GM12878 (cell line): ENCODE measurements at regions of chr10 and their contacts with region 1.

Region 1: DNA sequence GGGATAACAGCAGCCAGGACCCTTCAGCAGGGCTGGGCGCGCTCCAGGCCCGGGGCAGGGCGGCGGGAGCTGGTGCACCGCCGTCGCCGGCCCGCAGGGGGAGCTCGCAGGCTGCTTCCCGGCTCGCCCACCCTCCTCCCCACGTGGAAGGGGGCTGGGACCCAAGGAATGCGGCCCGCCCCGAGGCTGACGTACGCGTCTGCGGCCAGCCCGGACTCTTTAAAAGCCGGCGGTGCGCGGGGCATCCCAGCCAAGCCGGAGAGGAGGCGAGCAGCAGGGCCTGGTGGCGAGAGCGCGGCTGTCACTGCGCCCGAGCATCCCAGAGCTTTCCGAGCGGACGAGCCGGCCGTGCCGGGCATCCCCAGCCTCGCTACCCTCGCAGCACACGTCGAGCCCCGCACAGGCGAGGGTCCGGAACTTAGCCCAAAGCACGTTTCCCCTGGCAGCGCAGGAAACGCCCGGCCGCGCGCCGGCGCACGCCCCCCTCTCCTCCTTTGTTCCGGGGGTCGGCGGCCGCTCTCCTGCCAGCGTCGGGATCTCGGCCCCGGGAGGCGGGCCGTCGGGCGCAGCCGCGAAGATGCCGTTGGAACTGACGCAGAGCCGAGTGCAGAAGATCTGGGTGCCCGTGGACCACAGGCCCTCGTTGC is at the start of gene PFKFB3:
- DNase-seq: peak; percentile 59
- ATAC-seq: peak; percentile 80
- H3K4me3 ChIP-seq: peak within 1 kb of the TSS; percentile 95
- H3K27ac ChIP-seq: peak within 1 kb of the TSS; percentile 35; the same call in 1 of the 2 replicates
- H3K4me1 ChIP-seq: peaks cover 10% of the 10 kb centered on the region
- H3K27me3 ChIP-seq: no peaks in the 10 kb centered on the region
- CTCF ChIP-seq: peak; percentile 84 to 96 (median 90); a peak in 5 of 6 replicates
- EP300 ChIP-seq: peak in 1 of 2 experiments; percentile 8; a peak in 1 of 4 replicates
- POLR2A ChIP-seq: peak; percentile 100
- RAD21 ChIP-seq: peak; percentile 76
- polyA plus RNA-seq, gene PFKFB3: 1.6 to 2.6 TPM

Region 2: DNA sequence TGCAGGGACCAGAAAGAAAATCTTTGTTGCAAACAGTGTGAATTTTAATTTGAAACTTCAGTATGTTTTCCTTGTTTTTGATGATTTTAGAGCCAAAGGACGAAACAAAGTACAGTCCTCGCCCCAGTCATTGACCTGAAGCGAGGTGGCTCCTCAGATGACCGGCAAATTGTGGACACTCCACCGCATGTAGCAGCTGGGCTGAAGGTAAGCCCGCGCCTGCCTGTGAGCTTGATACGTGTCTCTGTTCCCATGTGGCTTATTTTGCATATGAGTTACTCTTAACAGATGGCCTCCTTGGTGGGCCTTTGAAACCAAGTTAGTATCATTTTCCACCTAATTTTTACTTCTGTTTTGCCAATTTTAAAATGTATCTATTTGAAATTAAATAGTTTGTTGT is 101.6 kb before region 1 on chr10:
- CTCF ChIA-PET with region 1: interaction called, 11 read pairs
- POLR2A ChIA-PET with region 1: interaction called, 10 read pairs
- RAD21 ChIA-PET with region 1: interaction called, 3 read pairs
- SMC1A ChIA-PET with region 1: interaction called, 10 read pairs
- in situ Hi-C with region 1: no loop called
- intact Hi-C with region 1: no loop called
- DNase-seq: no peak
- ATAC-seq: peak; percentile 94
- H3K4me3 ChIP-seq: no peak overlapping the region
- H3K27ac ChIP-seq: peak overlapping the region; percentile 53
- H3K4me1 ChIP-seq: peaks cover 7% of the 10 kb centered on the region
- H3K27me3 ChIP-seq: no peaks in the 10 kb centered on the region
- CTCF ChIP-seq: no peak
- EP300 ChIP-seq: no peak
- POLR2A ChIP-seq: peak; percentile 55; the same call in 1 of the 2 replicates
- RAD21 ChIP-seq: no peak

Region 3: DNA sequence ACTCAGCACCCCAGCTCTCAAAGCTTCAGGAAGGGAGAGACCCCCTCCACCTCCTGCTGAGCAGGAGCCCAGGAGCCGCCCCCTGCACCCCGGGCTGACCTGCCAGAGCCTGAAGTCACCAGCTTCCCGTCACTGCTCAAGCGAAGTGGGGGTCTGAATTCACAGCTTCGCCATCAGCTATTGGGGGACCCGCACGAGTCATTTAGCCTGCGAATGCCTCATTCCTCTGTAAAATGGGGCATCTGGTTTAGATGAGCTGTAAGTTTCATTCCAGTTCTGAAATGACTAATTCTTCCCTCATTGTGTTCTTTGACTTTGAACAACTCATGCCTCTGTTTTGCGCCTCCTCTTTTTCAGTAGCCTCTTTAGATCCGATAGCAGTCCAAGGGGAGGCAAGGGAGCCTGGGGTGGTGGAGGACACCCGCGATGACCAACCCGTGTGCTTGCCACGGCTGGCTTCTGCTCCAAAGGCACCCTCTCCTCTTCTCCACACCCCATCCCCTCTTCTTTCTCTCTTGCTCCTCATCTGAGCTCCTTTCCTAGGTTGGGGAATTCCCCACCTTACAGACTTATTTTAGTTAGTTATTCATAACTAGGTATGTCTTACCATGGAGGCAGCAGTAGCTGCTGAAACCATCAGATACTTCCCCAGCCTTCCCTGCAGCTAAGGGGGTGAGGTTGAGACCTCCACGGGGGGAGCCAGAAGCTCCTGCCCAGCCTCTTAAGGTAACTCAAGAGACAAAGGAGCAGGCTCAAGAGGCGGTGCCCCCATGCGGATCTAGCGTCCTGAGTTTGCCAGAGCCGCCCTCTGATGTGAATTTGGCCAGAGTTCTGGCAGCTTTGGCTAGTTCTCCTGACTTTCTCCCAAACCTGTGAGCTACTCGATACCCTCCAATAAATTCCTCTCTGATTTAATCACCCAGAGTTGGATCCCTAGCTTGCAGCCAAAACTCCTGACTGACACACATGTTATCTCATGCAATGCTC is 66.3 kb before region 1 on chr10:
- CTCF ChIA-PET with region 1: interaction called, 24 read pairs
- POLR2A ChIA-PET with region 1: interaction called, 5 read pairs
- RAD21 ChIA-PET with region 1: interaction called, 24 read pairs
- SMC1A ChIA-PET with region 1: interaction called, 28 read pairs
- in situ Hi-C with region 1: no loop called
- intact Hi-C with region 1: no loop called
- DNase-seq: peak; percentile 66
- ATAC-seq: peak; percentile 71
- H3K4me3 ChIP-seq: peak overlapping the region; percentile 54
- H3K27ac ChIP-seq: peak overlapping the region; percentile 63
- H3K4me1 ChIP-seq: peaks cover 38% of the 10 kb centered on the region
- H3K27me3 ChIP-seq: no peaks in the 10 kb centered on the region
- CTCF ChIP-seq: 0 out of 6 replicates have a peak, but pooled peaks of 1 of the 3 experiments have one; percentile 1
- EP300 ChIP-seq: peak in 1 of 2 experiments; percentile 74; a peak in 2 of 4 replicates
- POLR2A ChIP-seq: no peak
- RAD21 ChIP-seq: no peak

Region 4: DNA sequence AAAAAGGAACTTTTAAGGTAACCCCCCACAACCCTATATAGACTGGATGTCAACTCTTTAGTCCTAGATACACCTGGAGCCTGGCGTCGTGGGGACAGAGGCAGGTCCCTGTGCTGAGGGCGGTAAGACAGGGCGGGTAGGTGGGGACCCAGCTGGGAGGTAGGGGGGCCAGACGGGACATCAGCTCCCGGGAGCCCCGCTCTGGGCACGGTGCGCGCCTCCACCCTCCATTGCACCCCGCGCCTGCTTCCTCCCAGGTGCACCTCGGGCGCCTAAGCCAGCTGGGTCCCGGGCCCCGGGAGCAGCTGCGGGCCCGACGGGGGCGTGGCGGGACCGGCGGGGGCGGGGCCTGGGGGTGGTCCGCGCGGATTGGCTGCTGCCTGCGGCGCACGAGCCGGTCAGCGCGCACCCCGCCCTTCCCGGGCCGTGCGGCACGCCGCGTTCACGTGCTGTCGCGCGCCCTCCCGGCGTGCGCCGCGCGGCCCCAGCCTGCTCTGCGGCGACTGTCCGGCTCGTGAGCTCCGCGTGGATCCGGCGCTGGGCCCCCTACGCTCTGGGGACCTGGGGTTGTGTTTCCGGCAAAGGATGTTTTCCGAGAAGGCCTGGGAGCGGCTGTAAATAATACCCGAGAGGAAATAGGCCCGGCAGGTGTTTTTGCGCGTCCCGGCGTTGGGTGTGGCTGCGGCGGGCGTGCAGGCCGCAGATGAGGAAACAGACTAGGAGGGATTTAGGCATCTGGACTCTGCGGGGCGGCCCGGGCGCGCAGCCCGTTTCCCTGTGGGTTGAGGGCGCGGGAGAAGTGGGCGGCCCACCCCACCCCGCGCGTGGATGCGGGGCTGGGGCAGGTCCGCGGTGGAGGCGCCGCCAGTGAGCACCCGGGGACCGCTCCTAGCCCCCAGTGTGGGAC is 39.2 kb before region 1 on chr10:
- CTCF ChIA-PET with region 1: interaction called, 7 read pairs
- POLR2A ChIA-PET with region 1: interaction called, 8 read pairs
- RAD21 ChIA-PET with region 1: interaction called, 9 read pairs
- SMC1A ChIA-PET with region 1: interaction called, 7 read pairs
- in situ Hi-C with region 1: no loop called
- intact Hi-C with region 1: loop called (anchors 2 kb)
- DNase-seq: peak; percentile 47
- ATAC-seq: peak; percentile 99
- H3K4me3 ChIP-seq: peak overlapping the region; percentile 67
- H3K27ac ChIP-seq: peak overlapping the region; percentile 83
- H3K4me1 ChIP-seq: no peaks in the 10 kb centered on the region; the same call in 1 of the 2 replicates
- H3K27me3 ChIP-seq: no peaks in the 10 kb centered on the region
- CTCF ChIP-seq: no peak
- EP300 ChIP-seq: no peak
- POLR2A ChIP-seq: peak; percentile 85
- RAD21 ChIP-seq: no peak

Region 5: GRCh38 chr10:6275022-6275997 is 72.5 kb after region 1 on chr10:
- CTCF ChIA-PET with region 1: interaction called, 5 read pairs
- POLR2A ChIA-PET with region 1: interaction called, 3 read pairs
- RAD21 ChIA-PET with region 1: interaction called, 13 read pairs
- SMC1A ChIA-PET with region 1: interaction called, 4 read pairs
- in situ Hi-C with region 1: no loop called
- intact Hi-C with region 1: loop called (anchors 1 kb)
- DNase-seq: peak; percentile 49
- ATAC-seq: peak; percentile 77
- H3K4me3 ChIP-seq: peak overlapping the region; percentile 10; the same call in 1 of the 2 replicates
- H3K27ac ChIP-seq: peak overlapping the region; percentile 51
- H3K4me1 ChIP-seq: peaks cover 28% of the 10 kb centered on the region
- H3K27me3 ChIP-seq: peaks cover 0 to 1% of the 10 kb centered on the region in 2 experiments; a peak in 1 of 4 replicates
- CTCF ChIP-seq: 0 out of 6 replicates have a peak, but pooled peaks of 1 of the 3 experiments have one; percentile 2
- EP300 ChIP-seq: 0 out of 4 replicates have a peak, but pooled peaks have one; percentile 51 to 52
- POLR2A ChIP-seq: peak; percentile 77
- RAD21 ChIP-seq: peak; percentile 10; the same call in 1 of the 2 replicates

Region 6: GRCh38 chr10:6348096-6348874 is 145.5 kb after region 1 on chr10:
- CTCF ChIA-PET with region 1: interaction called, 15 read pairs
- POLR2A ChIA-PET with region 1: interaction called, 7 read pairs
- RAD21 ChIA-PET with region 1: interaction called, 35 read pairs
- SMC1A ChIA-PET with region 1: interaction called, 14 read pairs
- in situ Hi-C with region 1: no loop called
- intact Hi-C with region 1: loop called (anchors 1 kb)
- DNase-seq: peak; percentile 93
- ATAC-seq: peak; percentile 95
- H3K4me3 ChIP-seq: peak overlapping the region; percentile 27; the same call in 1 of the 2 replicates
- H3K27ac ChIP-seq: peak overlapping the region; percentile 23
- H3K4me1 ChIP-seq: peaks cover 26% of the 10 kb centered on the region
- H3K27me3 ChIP-seq: no peaks in the 10 kb centered on the region
- CTCF ChIP-seq: no peak
- EP300 ChIP-seq: peak; percentile 96 to 97; a peak in 3 of 4 replicates
- POLR2A ChIP-seq: no peak
- RAD21 ChIP-seq: 0 out of 2 replicates have a peak, but pooled peaks have one; percentile 23

Region 7: DNA sequence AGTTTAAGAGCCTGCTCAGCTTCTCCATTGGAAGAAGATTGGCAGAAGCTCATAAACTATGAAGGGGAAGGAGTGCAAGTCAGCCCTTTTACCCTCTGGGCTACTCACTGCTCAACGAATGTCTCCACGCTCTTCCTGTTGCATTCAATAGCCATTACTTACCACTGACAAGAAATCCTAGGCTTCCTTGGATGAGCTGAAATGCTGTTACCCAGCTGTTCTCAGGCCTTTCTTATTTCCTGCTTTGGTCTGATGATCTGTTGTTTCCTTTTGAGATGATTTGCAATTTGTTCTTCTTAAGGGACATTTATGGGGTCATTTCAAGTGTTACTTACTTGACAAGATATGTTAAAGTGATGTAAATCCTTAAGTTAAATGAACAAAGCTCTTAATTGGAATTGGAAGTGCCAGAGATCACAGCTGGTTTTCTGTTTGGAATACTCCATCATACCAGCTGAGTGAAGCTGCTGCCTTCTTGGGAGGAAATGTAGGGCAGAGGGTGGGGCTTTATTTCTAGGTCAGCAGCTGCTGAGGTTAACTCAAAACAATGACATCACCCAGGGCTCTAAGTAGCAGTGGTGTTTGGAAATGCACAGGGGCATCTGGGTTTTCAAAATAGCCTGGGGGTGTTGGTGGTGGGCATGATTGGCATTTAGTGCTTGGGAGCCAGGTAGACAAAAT is 207.3 kb after region 1 on chr10:
- CTCF ChIA-PET with region 1: interaction called, 46 read pairs
- POLR2A ChIA-PET with region 1: interaction called, 5 read pairs
- RAD21 ChIA-PET with region 1: interaction called, 29 read pairs
- SMC1A ChIA-PET with region 1: interaction called, 28 read pairs
- in situ Hi-C with region 1: no loop called
- intact Hi-C with region 1: no loop called
- DNase-seq: no peak
- ATAC-seq: peak; percentile 72
- H3K4me3 ChIP-seq: no peak overlapping the region
- H3K27ac ChIP-seq: no peak overlapping the region
- H3K4me1 ChIP-seq: no peaks in the 10 kb centered on the region
- H3K27me3 ChIP-seq: no peaks in the 10 kb centered on the region; a peak in 1 of 4 replicates
- CTCF ChIP-seq: no peak
- EP300 ChIP-seq: no peak
- POLR2A ChIP-seq: no peak
- RAD21 ChIP-seq: no peak